ENCODE measurements at regions of chr7 and their contacts with region 1.

Region 1: DNA sequence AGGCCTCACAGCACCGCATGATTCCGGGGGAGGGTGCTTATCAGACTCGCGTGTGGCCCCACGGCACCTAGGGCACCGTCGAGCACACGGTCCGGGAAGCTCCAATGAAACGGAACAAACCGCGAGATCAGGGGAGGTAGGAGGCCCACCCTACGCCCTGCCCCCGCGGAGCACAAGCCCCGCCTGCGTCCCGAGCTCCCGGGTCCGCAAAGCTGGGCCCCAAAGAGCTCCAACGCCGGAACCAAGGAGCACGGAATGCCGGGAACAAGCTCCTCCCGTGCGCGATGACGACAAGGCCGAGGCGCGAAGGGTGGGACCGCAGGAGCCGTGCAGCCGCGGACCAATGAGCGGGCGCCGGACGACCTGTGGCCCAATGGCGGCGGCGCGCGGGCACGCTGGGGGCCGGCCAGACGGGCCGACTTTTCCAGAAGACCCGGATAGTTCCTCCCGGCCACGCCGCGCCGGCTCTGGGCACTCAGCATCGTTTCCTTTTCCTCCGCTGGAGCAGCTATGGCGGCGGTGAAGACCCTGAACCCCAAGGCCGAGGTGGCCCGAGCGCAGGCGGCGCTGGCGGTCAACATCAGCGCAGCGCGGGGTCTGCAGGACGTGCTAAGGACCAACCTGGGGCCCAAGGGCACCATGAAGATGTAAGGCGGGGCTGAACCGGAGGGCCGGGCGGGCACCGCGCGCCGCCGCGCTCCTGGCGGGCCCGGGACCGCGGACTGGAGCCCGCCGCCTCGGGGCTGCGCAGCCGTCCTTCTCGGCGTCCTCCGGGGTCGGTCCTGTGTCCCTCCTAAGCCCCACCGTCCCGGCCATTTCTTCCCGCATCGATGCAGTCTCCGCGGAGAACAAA is at the starts of genes CCT6A and PSPH:
- DNase-seq: peak; percentile 91
- ATAC-seq: peak; percentile 93
- H3K4me3 ChIP-seq: peak within 1 kb of the TSS; percentile 65 to 90 (median 75)
- H3K4me3 Mint-ChIP-seq: peak within 1 kb of the TSS; percentile 96
- H3K27ac ChIP-seq: peak within 1 kb of the TSS; percentile 72 to 78
- H3K27ac Mint-ChIP-seq: peak within 1 kb of the TSS; percentile 94
- H3K4me1 ChIP-seq: peaks cover 17 to 25% of the 10 kb centered on the region in 2 donors
- H3K4me1 Mint-ChIP-seq: peaks cover 30% of the 10 kb centered on the region
- H3K27me3 ChIP-seq: no peaks in the 10 kb centered on the region
- H3K27me3 Mint-ChIP-seq: no peaks in the 10 kb centered on the region
- CTCF ChIP-seq: no peak
- total RNA-seq, gene CCT6A: 71.3 and 79.0 TPM in 2 replicates
- total RNA-seq, gene PSPH: 4.1 and 6.2 TPM in 2 replicates

Region 2: DNA sequence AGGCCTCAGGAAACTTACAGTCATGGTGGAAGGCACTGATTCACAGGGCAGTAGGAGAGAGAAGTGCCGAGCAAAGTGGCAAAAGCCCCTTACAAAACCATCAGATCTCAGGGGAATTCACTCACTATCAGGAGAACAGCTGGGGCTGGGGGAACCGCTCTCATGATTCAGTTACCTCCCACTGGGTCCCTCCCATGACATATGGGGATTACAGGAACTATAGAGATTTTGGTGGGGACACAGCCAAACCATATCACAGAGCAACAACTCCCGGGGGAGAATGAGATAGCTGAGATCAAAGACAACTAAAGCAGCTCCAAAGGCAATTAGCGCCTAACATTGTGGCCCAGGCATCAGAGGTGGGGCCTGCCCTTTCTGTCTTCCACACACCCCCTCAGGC is 393.9 kb before region 1 on chr7:
- CTCF ChIA-PET with region 1: no interaction called
- POLR2A ChIA-PET with region 1: no interaction called
- intact Hi-C with region 1: no loop called
- DNase-seq: no peak
- ATAC-seq: no peak
- H3K4me3 ChIP-seq: no peak overlapping the region
- H3K4me3 Mint-ChIP-seq: no peak overlapping the region
- H3K27ac ChIP-seq: no peak overlapping the region
- H3K27ac Mint-ChIP-seq: no peak overlapping the region
- H3K4me1 ChIP-seq: no peaks in the 10 kb centered on the region
- H3K4me1 Mint-ChIP-seq: no peaks in the 10 kb centered on the region
- H3K27me3 ChIP-seq: no peaks in the 10 kb centered on the region
- H3K27me3 Mint-ChIP-seq: peaks cover 4% of the 10 kb centered on the region
- CTCF ChIP-seq: no peak

Region 3: DNA sequence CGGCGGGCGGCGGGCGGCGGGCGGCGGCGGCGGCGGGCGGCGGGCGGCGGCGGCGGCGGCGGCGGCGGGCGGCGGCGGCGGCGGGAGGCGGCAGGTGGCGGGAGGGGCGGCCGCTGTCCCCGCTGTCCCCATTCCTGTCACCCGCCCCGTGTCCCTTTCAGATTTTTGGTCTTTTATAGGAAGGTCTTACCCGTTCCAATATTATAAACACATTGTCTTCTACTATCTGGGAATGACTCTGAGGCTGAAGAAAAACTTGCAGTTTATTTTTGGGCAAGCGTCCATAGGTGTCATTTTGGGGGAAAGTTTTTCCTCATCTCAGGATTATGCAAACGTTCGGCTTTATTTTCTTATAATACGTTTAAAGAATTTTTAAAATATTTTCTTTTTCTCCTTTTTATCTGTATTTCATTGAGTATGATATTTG is 163.7 kb before region 1 on chr7:
- CTCF ChIA-PET with region 1: no interaction called
- POLR2A ChIA-PET with region 1: no interaction called
- intact Hi-C with region 1: loop called (anchors 5 kb)
- DNase-seq: peak; percentile 34
- ATAC-seq: no peak
- H3K4me3 ChIP-seq: peak overlapping the region; percentile 36 to 70 (median 59)
- H3K4me3 Mint-ChIP-seq: peak overlapping the region; percentile 90
- H3K27ac ChIP-seq: no peak overlapping the region
- H3K27ac Mint-ChIP-seq: peak overlapping the region; percentile 86
- H3K4me1 ChIP-seq: peaks cover 0 to 11% of the 10 kb centered on the region in 2 donors
- H3K4me1 Mint-ChIP-seq: peaks cover 8% of the 10 kb centered on the region
- H3K27me3 ChIP-seq: no peaks in the 10 kb centered on the region
- H3K27me3 Mint-ChIP-seq: peaks cover 4% of the 10 kb centered on the region
- CTCF ChIP-seq: no peak

Region 4: GRCh38 chr7:55964261-55965099 is 87.1 kb before region 1 on chr7 and contains the start of gene NIPSNAP2:
- CTCF ChIA-PET with region 1: interaction called, 3 read pairs
- POLR2A ChIA-PET with region 1: no interaction called
- intact Hi-C with region 1: loop called (anchors 1 kb)
- DNase-seq: peak; percentile 80
- ATAC-seq: peak; percentile 90
- H3K4me3 ChIP-seq: peak within 1 kb of the TSS; percentile 48 to 66 (median 58)
- H3K4me3 Mint-ChIP-seq: peak within 1 kb of the TSS; percentile 91
- H3K27ac ChIP-seq: peak within 1 kb of the TSS; percentile 75 to 88
- H3K27ac Mint-ChIP-seq: peak within 1 kb of the TSS; percentile 93
- H3K4me1 ChIP-seq: peaks cover 8 to 16% of the 10 kb centered on the region in 2 donors
- H3K4me1 Mint-ChIP-seq: peaks cover 36% of the 10 kb centered on the region
- H3K27me3 ChIP-seq: no peaks in the 10 kb centered on the region
- H3K27me3 Mint-ChIP-seq: no peaks in the 10 kb centered on the region
- CTCF ChIP-seq: peak; percentile 58
- total RNA-seq, gene NIPSNAP2: 40.4 and 42.6 TPM in 2 replicates

Region 5: GRCh38 chr7:56063882-56064625 is 12.5 kb after region 1 on chr7 and contains the start of gene SUMF2:
- CTCF ChIA-PET with region 1: interaction called, 7 read pairs
- POLR2A ChIA-PET with region 1: interaction called, 25 read pairs
- intact Hi-C with region 1: loop called (anchors 1 kb)
- DNase-seq: peak; percentile 95
- ATAC-seq: peak; percentile 92
- H3K4me3 ChIP-seq: peak within 1 kb of the TSS; percentile 63 to 94 (median 83)
- H3K4me3 Mint-ChIP-seq: peak within 1 kb of the TSS; percentile 86
- H3K27ac ChIP-seq: peak within 1 kb of the TSS; percentile 59 to 78
- H3K27ac Mint-ChIP-seq: peak within 1 kb of the TSS; percentile 94
- H3K4me1 ChIP-seq: peaks cover 5 to 12% of the 10 kb centered on the region in 2 donors
- H3K4me1 Mint-ChIP-seq: peaks cover 22% of the 10 kb centered on the region
- H3K27me3 ChIP-seq: no peaks in the 10 kb centered on the region
- H3K27me3 Mint-ChIP-seq: no peaks in the 10 kb centered on the region
- CTCF ChIP-seq: peak; percentile 21
- total RNA-seq, gene SUMF2: 112 and 115 TPM in 2 replicates

Region 6: GRCh38 chr7:56106108-56107073 is 54.8 kb after region 1 on chr7 and contains the start of gene CHCHD2:
- CTCF ChIA-PET with region 1: no interaction called
- POLR2A ChIA-PET with region 1: no interaction called
- intact Hi-C with region 1: loop called (anchors 1 kb)
- DNase-seq: peak; percentile 97
- ATAC-seq: peak; percentile 99
- H3K4me3 ChIP-seq: peak within 1 kb of the TSS; percentile 75 to 99 (median 87)
- H3K4me3 Mint-ChIP-seq: peak within 1 kb of the TSS; percentile 99
- H3K27ac ChIP-seq: peak within 1 kb of the TSS; percentile 77 to 89
- H3K27ac Mint-ChIP-seq: peak within 1 kb of the TSS; percentile 98
- H3K4me1 ChIP-seq: peaks cover 17 to 22% of the 10 kb centered on the region in 2 donors
- H3K4me1 Mint-ChIP-seq: peaks cover 36% of the 10 kb centered on the region
- H3K27me3 ChIP-seq: peaks cover 0 to 3% (median 0%) of the 10 kb centered on the region in 4 experiments
- H3K27me3 Mint-ChIP-seq: peaks cover 3% of the 10 kb centered on the region
- CTCF ChIP-seq: no peak
- total RNA-seq, gene CHCHD2: 166 and 168 TPM in 2 replicates

Measured in B cell (primary cell).